ENCODE measurements at regions of chr15 and their contacts with region 1.

Region 1: GRCh38 chr15:55484917-55485672 is 22.9 kb downstream of the DNAAF4 start:
- DNase-seq: no peak
- H3K4me3 ChIP-seq: no peak overlapping the region
- H3K27ac ChIP-seq: no peak overlapping the region
- H3K4me1 ChIP-seq: 0 out of 2 replicates have a peak, but pooled peaks cover 7% of the 10 kb centered on the region
- H3K27me3 ChIP-seq: no peaks in the 10 kb centered on the region
- CTCF ChIP-seq: no peak

Region 2: GRCh38 chr15:55132672-55133071 is 352.4 kb before region 1 on chr15:
- CTCF ChIA-PET with region 1: no interaction called
- POLR2A ChIA-PET with region 1: interaction called, 12 read pairs
- intact Hi-C with region 1: no loop called
- DNase-seq: no peak
- H3K4me3 ChIP-seq: no peak overlapping the region
- H3K27ac ChIP-seq: no peak overlapping the region
- H3K4me1 ChIP-seq: no peaks in the 10 kb centered on the region
- H3K27me3 ChIP-seq: peaks cover 19% of the 10 kb centered on the region
- CTCF ChIP-seq: no peak

Measured in PC-9 (cell line).